Adrenal gland (tissue), 19 donors: ENCODE measurements at regions of chr7 and their contacts with region 1.

Region 1: DNA sequence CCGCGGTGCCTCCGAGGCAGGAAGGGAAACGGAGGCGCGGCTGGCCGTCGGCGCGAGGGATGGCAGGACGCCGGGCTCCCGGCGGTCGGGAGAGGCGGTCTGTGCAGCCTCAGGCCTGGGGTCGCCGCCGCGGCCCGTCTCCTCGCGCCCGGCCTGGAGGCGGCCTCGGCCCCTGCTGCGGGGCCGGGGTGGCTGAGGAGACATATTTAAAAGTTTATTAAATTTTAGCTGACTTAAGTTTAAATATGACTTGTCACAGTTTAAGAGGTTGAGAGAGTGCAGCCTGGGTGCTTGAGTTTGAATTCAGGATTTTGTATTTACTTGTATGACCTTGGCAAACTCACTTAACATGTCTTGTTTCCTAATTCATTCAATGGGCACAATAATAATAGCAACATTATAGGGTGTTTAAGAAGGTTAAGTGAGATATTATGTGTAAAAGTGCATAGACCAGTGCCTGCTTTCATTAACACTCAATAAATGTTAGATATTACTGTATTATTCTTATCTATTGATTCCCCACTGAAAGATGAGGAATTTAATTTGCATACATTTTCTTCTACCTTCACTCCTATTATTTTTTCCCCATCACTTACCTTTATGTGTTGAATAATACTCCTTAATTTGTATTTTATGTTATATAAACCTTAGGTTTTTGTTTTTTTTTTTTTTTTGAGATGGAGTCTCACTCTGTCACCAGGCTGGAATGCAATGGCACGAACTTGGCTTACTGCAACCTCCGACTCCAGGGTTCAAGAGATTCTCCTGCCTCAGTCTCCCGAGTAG is 718 bp downstream of the DYNC2I1 start:
- DNase-seq: peak in 1 of 7 donors; percentile 43
- H3K4me3 ChIP-seq: peak overlapping the region; percentile 10 to 93 (median 60)
- H3K27ac ChIP-seq: peak overlapping the region in 4 of 5 donors; percentile 73 to 84 (median 74)
- H3K4me1 ChIP-seq: peaks cover 8 to 24% of the 10 kb centered on the region in 2 donors
- H3K27me3 ChIP-seq: no peaks in the 10 kb centered on the region
- CTCF ChIP-seq: no peak
- POLR2A ChIP-seq: no peak

Region 2: GRCh38 chr7:158704704-158705468 is 152.2 kb before region 1 on chr7 and contains the start of gene NCAPG2:
- intact Hi-C with region 1: loop called in 1 of 2 experiments (anchors 10 kb)
- DNase-seq: peak; percentile 98 to 99 (median 99)
- H3K4me3 ChIP-seq: peak within 1 kb of the TSS in 3 of 4 donors; percentile 59 to 67 (median 65)
- H3K27ac ChIP-seq: peak within 1 kb of the TSS in 4 of 5 donors; percentile 31 to 89 (median 80)
- H3K4me1 ChIP-seq: peaks cover 7% of the 10 kb centered on the region in 2 donors
- H3K27me3 ChIP-seq: no peaks in the 10 kb centered on the region
- CTCF ChIP-seq: peak in 5 of 6 experiments; percentile 43 to 79 (median 52)
- POLR2A ChIP-seq: peak; percentile 85 to 88
- total RNA-seq, gene NCAPG2: 4.6 to 11.6 (median 6.3) TPM

Region 3: GRCh38 chr7:158796542-158797066 is 60.5 kb before region 1 on chr7:
- intact Hi-C with region 1: no loop called
- DNase-seq: no peak
- H3K4me3 ChIP-seq: no peak overlapping the region
- H3K27ac ChIP-seq: no peak overlapping the region
- H3K4me1 ChIP-seq: no peaks in the 10 kb centered on the region
- H3K27me3 ChIP-seq: no peaks in the 10 kb centered on the region
- CTCF ChIP-seq: no peak
- POLR2A ChIP-seq: no peak

Region 4: GRCh38 chr7:159237048-159237653 is 380.1 kb after region 1 on chr7:
- intact Hi-C with region 1: no loop called
- DNase-seq: no peak
- H3K4me3 ChIP-seq: no peak overlapping the region
- H3K27ac ChIP-seq: no peak overlapping the region
- H3K4me1 ChIP-seq: no peaks in the 10 kb centered on the region
- H3K27me3 ChIP-seq: no peaks in the 10 kb centered on the region
- CTCF ChIP-seq: no peak
- POLR2A ChIP-seq: no peak